Activated T-helper 2 cell treated with anti-CD3 and anti-CD28 coated beads, Interferon-gamma antibody, Interleukin-2, Interleukin-4, amounts not matched to agents 10 μg/mL and 5 μg/mL and 100 μg/mL, durations not matched to agents 14 hours and 24 hours and 36 hours (primary cell): ENCODE measurements at regions of chr15 and their contacts with region 1.

Region 1: GRCh38 chr15:84716036-84716799 is at the start of gene SEC11A:
- DNase-seq: peak; percentile 89
- H3K4me3 Mint-ChIP-seq: peak within 1 kb of the TSS; percentile 92
- H3K27ac Mint-ChIP-seq: peak within 1 kb of the TSS; percentile 89
- H3K4me1 Mint-ChIP-seq: peaks cover 32% of the 10 kb centered on the region
- H3K27me3 Mint-ChIP-seq: no peaks in the 10 kb centered on the region
- total RNA-seq, gene SEC11A: 115 and 117 TPM in 2 replicates

Region 2: DNA sequence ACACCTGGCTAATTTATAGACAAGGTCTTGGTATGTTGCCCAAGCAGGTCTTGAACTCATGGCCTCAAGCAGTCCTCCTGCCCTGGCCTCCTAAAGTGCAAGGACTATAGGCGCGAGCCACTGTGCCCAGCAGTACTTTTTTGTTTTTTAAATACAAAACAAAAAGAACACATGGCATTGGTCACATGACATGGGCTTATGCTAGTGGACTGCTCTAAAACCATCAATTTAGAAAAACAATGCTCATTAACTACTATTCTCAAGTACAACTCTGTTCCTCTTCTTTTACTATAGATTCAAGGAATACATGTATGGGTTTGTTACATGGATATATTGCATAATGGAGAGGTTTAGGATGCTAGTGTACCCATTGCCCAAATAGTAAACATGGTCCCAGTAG is 12.6 kb after region 1 on chr15:
- intact Hi-C with region 1: loop called (anchors 1 kb)
- DNase-seq: no peak
- H3K4me3 Mint-ChIP-seq: no peak overlapping the region
- H3K27ac Mint-ChIP-seq: no peak overlapping the region
- H3K4me1 Mint-ChIP-seq: peaks cover 36% of the 10 kb centered on the region
- H3K27me3 Mint-ChIP-seq: no peaks in the 10 kb centered on the region

Region 3: GRCh38 chr15:84734794-84735479 is 18.7 kb after region 1 on chr15:
- intact Hi-C with region 1: loop called (anchors 1 kb)
- DNase-seq: peak; percentile 72
- H3K4me3 Mint-ChIP-seq: peak overlapping the region; percentile 59
- H3K27ac Mint-ChIP-seq: peak overlapping the region; percentile 95
- H3K4me1 Mint-ChIP-seq: peaks cover 40% of the 10 kb centered on the region
- H3K27me3 Mint-ChIP-seq: no peaks in the 10 kb centered on the region

Region 4: DNA sequence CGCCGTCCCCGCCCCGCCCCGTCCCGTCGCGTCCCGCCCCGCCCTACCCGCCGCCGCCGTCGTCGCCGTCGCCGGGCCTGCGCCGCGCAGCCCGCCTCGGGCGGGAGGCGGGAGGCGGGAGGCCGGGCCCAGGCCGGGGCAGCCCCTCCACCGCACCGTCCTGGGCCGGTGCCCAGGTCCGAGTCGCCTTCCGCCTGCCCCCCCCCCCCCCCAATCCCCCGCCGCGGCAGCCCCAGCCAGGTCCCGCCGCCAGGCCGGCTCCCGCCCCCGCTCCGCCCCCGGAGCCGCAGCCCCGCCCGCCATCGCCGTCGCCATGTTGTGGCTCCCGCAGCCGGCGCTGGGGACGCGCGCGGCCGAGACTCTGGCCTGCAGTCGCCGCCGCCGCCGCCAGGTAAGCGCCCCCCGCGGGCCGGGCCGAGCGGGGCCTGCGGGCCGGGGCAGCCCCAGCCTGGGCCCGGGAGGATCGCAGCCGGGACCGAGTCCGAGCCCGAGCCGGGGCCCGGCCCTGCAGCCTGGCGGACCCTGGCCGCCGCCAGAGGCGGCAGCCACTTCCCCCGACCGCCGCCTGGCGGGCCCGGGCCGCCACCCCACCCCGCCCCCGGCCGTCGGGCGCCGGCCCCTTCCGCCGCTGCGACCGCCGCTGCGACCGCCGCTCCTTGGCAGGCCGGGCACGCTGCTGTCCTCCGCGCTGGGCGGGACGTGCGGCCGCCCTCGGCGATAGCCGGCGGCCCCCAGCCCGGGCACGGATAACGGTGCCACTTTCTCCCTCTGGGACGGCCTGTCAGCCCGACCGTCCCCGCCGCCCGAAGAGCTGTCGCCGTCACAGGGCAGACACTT is 32.3 kb after region 1 on chr15 and contains the start of gene ZNF592:
- intact Hi-C with region 1: loop called (anchors 1 kb)
- DNase-seq: peak; percentile 76
- H3K4me3 Mint-ChIP-seq: peak within 1 kb of the TSS; percentile 94
- H3K27ac Mint-ChIP-seq: peak within 1 kb of the TSS; percentile 97
- H3K4me1 Mint-ChIP-seq: peaks cover 47% of the 10 kb centered on the region
- H3K27me3 Mint-ChIP-seq: no peaks in the 10 kb centered on the region
- total RNA-seq, gene ZNF592: 29.3 and 31.3 TPM in 2 replicates

Region 5: DNA sequence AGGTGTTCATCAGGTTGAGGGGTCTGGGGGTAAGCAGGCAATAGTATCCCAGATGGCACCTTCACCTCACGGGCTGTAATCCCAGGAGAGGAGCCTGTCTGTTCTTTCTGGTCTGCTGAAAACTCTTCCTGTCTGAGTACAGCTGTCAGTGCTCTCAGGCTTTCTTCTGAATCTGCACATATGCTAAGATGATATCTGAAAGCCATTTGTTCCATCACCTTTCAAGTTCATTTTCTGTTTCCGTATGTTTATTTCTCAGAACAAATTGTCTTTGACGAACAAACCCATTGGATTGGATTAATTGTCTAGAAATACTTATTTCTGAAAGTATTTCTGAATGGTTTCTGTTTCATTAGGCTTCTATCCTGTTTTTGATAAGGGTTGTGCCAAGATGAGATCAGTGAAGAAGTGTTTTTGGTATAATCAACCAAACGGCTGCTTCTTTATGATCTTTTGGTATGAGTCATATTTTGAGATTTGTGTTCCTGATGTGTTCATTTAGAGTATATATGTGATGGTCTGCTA is 45.5 kb after region 1 on chr15:
- intact Hi-C with region 1: loop called (anchors 1 kb)
- DNase-seq: no peak
- H3K4me3 Mint-ChIP-seq: no peak overlapping the region
- H3K27ac Mint-ChIP-seq: no peak overlapping the region
- H3K4me1 Mint-ChIP-seq: peaks cover 30% of the 10 kb centered on the region
- H3K27me3 Mint-ChIP-seq: no peaks in the 10 kb centered on the region

Region 6: GRCh38 chr15:84810073-84810840 is 94.0 kb after region 1 on chr15:
- intact Hi-C with region 1: no loop called
- DNase-seq: no peak
- H3K4me3 Mint-ChIP-seq: no peak overlapping the region
- H3K27ac Mint-ChIP-seq: no peak overlapping the region
- H3K4me1 Mint-ChIP-seq: peaks cover 9% of the 10 kb centered on the region
- H3K27me3 Mint-ChIP-seq: no peaks in the 10 kb centered on the region

Region 7: GRCh38 chr15:84924074-84924731 is 208.0 kb after region 1 on chr15:
- intact Hi-C with region 1: no loop called
- DNase-seq: no peak
- H3K4me3 Mint-ChIP-seq: no peak overlapping the region
- H3K27ac Mint-ChIP-seq: no peak overlapping the region
- H3K4me1 Mint-ChIP-seq: peaks cover 5% of the 10 kb centered on the region
- H3K27me3 Mint-ChIP-seq: peaks cover 4% of the 10 kb centered on the region